ENCODE measurements at regions of chr18 and their contacts with region 1.

Region 1: DNA sequence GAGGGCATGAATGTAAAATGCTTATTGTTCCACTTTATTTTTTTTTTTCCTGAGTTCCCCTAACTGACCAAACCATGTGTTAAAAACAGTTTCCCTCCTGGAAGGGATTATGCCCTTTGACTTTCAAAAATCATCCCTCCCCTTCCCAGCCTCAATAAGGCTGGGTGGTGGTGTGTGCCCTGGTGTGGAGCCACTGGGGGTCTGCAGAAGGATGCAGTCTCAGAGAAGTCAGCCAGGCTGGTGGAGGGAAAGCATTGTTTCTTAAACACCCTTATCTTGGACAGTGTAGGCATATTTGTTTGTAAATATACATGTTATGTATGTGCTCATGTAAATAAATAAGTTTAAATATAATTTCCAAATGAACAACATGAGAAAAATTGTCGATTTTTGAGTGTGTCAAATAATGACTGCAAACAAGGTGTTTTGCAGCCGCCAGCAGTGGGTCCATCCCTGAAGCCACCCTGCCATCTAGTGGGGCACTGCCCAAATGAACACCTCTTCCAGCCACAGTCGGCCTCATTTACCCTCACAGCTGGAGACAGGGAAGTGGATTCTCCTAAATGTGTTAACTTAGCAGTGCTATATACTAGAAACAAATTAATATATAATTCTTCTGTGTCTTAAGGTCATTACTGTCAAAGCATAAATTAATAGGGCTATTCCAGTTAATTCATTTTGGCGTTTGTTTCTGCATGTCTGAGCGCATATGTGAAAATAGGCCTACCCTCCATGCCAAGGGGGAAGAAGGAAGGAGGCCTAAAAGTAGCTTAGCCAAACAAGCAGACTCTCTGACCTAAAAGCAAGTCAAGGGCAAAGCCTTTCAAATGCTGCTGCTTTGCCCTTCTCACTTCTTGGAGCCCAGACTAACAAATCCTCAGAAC is 209.6 kb upstream of the PIK3C3 start:
- H3K4me3 ChIP-seq: no peak overlapping the region
- H3K27ac ChIP-seq: no peak overlapping the region
- H3K4me1 ChIP-seq: no peaks in the 10 kb centered on the region
- CTCF ChIP-seq: 0 out of 2 replicates have a peak, but pooled peaks have one; percentile 33

Region 2: GRCh38 chr18:41905786-41906527 is 160.5 kb after region 1 on chr18:
- CTCF ChIA-PET with region 1: interaction called, 14 read pairs
- POLR2A ChIA-PET with region 1: no interaction called
- H3K4me3 ChIP-seq: no peak overlapping the region
- H3K27ac ChIP-seq: no peak overlapping the region
- H3K4me1 ChIP-seq: no peaks in the 10 kb centered on the region
- CTCF ChIP-seq: no peak

Measured in HEK293 (cell line).